GM12878 (cell line): ENCODE measurements at regions of chr11 and their contacts with region 1.

Region 1: DNA sequence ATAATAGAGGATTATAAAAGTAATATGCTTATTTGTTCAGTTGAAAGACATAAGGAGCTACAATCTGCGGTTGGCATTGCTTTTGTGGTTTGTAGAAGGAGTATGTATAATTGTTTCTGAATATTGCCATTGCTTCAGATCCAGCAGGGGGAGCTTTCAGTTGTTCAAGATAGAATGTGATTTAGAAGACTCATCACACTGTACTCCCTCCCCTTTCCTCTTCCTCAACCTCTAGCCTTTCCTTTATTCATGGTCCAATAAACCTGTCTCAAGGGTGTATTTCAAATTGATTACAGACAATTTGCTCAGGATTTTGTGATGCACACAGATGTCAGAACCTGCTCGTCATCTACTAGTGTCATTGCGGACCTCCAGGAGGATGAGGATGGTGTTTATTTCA is 9.8 kb downstream of the PRMT3 start:
- DNase-seq: no peak
- ATAC-seq: peak; percentile 95
- H3K4me3 ChIP-seq: no peak overlapping the region
- H3K27ac ChIP-seq: no peak overlapping the region
- H3K4me1 ChIP-seq: no peaks in the 10 kb centered on the region
- H3K27me3 ChIP-seq: no peaks in the 10 kb centered on the region
- CTCF ChIP-seq: peak; percentile 52 to 67 (median 56)
- EP300 ChIP-seq: no peak
- POLR2A ChIP-seq: no peak
- RAD21 ChIP-seq: peak; percentile 35; the same call in 1 of the 2 replicates

Region 2: GRCh38 chr11:20337526-20338154 is 59.6 kb before region 1 on chr11:
- CTCF ChIA-PET with region 1: no interaction called
- POLR2A ChIA-PET with region 1: no interaction called
- RAD21 ChIA-PET with region 1: no interaction called
- SMC1A ChIA-PET with region 1: no interaction called
- in situ Hi-C with region 1: no loop called
- intact Hi-C with region 1: no loop called
- DNase-seq: no peak
- ATAC-seq: peak; percentile 80
- H3K4me3 ChIP-seq: no peak overlapping the region
- H3K27ac ChIP-seq: no peak overlapping the region
- H3K4me1 ChIP-seq: no peaks in the 10 kb centered on the region
- H3K27me3 ChIP-seq: peaks cover 0 to 3% of the 10 kb centered on the region in 2 experiments; a peak in 3 of 4 replicates
- CTCF ChIP-seq: peak; percentile 37 to 68 (median 47); a peak in 5 of 6 replicates
- EP300 ChIP-seq: no peak
- POLR2A ChIP-seq: no peak
- RAD21 ChIP-seq: peak; percentile 61

Region 3: GRCh38 chr11:20407344-20407743 is 10.1 kb after region 1 on chr11:
- CTCF ChIA-PET with region 1: interaction called, 52 read pairs
- POLR2A ChIA-PET with region 1: interaction called, 3 read pairs
- RAD21 ChIA-PET with region 1: no interaction called
- SMC1A ChIA-PET with region 1: interaction called, 13 read pairs
- in situ Hi-C with region 1: no loop called
- intact Hi-C with region 1: no loop called
- DNase-seq: no peak
- ATAC-seq: no peak
- H3K4me3 ChIP-seq: no peak overlapping the region
- H3K27ac ChIP-seq: no peak overlapping the region
- H3K4me1 ChIP-seq: no peaks in the 10 kb centered on the region
- H3K27me3 ChIP-seq: no peaks in the 10 kb centered on the region
- CTCF ChIP-seq: no peak
- EP300 ChIP-seq: no peak
- POLR2A ChIP-seq: no peak
- RAD21 ChIP-seq: no peak

Region 4: GRCh38 chr11:20415432-20415831 is 18.2 kb after region 1 on chr11:
- CTCF ChIA-PET with region 1: interaction called, 52 read pairs
- POLR2A ChIA-PET with region 1: no interaction called
- RAD21 ChIA-PET with region 1: no interaction called
- SMC1A ChIA-PET with region 1: interaction called, 13 read pairs
- in situ Hi-C with region 1: no loop called
- intact Hi-C with region 1: no loop called
- DNase-seq: no peak
- ATAC-seq: no peak
- H3K4me3 ChIP-seq: no peak overlapping the region
- H3K27ac ChIP-seq: no peak overlapping the region
- H3K4me1 ChIP-seq: no peaks in the 10 kb centered on the region
- H3K27me3 ChIP-seq: no peaks in the 10 kb centered on the region
- CTCF ChIP-seq: no peak
- EP300 ChIP-seq: no peak
- POLR2A ChIP-seq: no peak
- RAD21 ChIP-seq: no peak

Region 5: GRCh38 chr11:20443596-20443995 is 46.3 kb after region 1 on chr11:
- CTCF ChIA-PET with region 1: interaction called, 23 read pairs
- POLR2A ChIA-PET with region 1: no interaction called
- RAD21 ChIA-PET with region 1: interaction called, 10 read pairs
- SMC1A ChIA-PET with region 1: interaction called, 5 read pairs
- in situ Hi-C with region 1: no loop called
- intact Hi-C with region 1: no loop called
- DNase-seq: no peak
- ATAC-seq: peak; percentile 54; the same call in 1 of the 3 replicates
- H3K4me3 ChIP-seq: no peak overlapping the region
- H3K27ac ChIP-seq: no peak overlapping the region
- H3K4me1 ChIP-seq: no peaks in the 10 kb centered on the region
- H3K27me3 ChIP-seq: no peaks in the 10 kb centered on the region
- CTCF ChIP-seq: peak in 2 of 3 experiments; percentile 33 to 41; a peak in 3 of 6 replicates
- EP300 ChIP-seq: no peak
- POLR2A ChIP-seq: no peak
- RAD21 ChIP-seq: peak; percentile 42; the same call in 1 of the 2 replicates

Region 6: DNA sequence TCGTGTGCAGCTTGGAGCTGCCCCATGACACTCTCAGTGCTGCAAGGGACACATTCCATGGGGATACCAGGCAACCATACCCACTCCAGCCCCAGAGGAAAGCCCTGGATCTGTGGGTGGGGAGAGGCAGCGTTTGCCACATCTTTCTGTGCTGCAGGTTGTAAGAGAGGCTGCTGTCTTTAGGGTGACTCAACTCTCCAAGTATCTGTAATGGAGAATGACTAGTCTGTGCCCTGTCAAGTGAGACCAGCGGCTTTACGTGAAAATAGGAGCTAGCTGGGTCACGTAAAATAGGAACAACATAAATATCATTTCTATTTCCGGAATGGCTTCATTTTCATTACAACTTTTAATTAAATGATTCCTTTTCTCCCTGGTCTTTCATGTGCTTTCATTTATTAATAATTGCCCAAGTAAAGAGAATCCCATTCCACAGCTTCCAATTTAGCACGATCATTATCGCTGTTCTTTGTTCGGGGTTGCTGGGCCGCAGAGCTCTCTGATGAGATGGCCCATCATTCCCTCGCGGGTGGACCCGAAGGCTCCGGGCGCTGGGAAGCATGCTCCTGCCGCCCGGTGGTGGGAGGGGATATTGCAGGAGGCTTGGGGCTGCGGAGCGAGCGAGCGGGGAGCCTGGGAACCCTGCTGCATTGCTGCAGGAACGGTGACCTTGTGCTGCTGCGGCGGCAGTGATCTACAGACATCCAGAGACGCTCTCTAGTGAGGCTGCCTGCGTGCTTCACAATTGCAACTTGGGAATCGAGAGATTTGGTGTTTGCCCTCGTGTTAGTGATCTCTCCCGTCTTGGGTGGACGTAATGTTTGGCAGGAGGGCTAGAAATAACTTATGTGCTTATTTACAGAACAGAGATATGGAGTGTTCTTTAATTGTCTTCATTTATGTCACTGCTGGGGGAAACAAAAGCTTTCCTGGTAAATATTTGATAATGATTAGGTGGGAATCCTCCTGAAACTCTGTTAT is 212.7 kb after region 1 on chr11:
- CTCF ChIA-PET with region 1: interaction called, 73 read pairs
- POLR2A ChIA-PET with region 1: no interaction called
- RAD21 ChIA-PET with region 1: interaction called, 18 read pairs
- SMC1A ChIA-PET with region 1: interaction called, 24 read pairs
- in situ Hi-C with region 1: loop called (anchors 5 kb)
- intact Hi-C with region 1: loop called (anchors 1 kb)
- DNase-seq: no peak
- ATAC-seq: peak; percentile 99
- H3K4me3 ChIP-seq: peak overlapping the region; percentile 32; the same call in 1 of the 2 replicates
- H3K27ac ChIP-seq: no peak overlapping the region
- H3K4me1 ChIP-seq: peaks cover 4% of the 10 kb centered on the region; the same call in 1 of the 2 replicates
- H3K27me3 ChIP-seq: peaks cover 3 to 16% of the 10 kb centered on the region in 2 experiments
- CTCF ChIP-seq: peak; percentile 96 to 98 (median 97)
- EP300 ChIP-seq: no peak
- POLR2A ChIP-seq: no peak
- RAD21 ChIP-seq: peak; percentile 97